Heart right ventricle (tissue), 16 donors: ENCODE measurements at regions of chr3 and their contacts with region 1.

Region 1: DNA sequence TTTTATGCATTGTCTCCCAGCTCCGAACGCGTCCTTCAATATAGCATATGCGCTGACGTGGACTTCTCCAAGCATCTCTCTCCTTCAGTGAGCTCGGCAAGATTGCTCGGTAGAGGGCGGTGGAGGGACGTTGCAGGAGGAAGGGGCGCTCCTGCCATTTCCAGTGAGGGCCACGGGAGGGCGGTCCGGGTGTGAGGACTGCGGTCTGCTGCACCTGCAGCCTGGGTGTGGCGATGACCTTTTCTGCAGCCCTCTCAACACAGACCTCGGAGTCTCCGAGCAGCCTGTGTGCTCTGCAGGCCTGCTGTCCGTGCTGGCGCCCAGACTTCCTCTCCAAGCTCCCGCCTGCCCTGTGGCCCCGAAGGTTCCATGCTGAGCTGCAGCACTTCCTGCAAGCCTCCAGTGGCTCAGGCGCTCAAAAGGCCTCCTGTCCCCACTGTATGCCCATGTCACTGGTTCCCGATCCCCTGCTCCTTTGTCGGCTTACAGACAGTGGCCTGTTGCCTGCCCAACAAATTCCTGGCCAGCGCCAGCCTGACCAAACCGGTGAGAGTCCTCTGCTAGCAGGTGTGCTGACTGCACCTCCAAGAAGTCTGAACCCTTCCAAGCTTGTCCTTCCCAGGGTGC is 8.9 kb upstream of the RTP3 start:
- DNase-seq: peak; percentile 91
- ATAC-seq: peak; percentile 81 to 95 (median 92)
- H3K4me3 ChIP-seq: peak overlapping the region in 4 of 10 donors; percentile 13 to 38 (median 16)
- H3K27ac ChIP-seq: no peak overlapping the region
- H3K4me1 ChIP-seq: peaks cover 0 to 27% (median 11%) of the 10 kb centered on the region in 9 donors
- H3K27me3 ChIP-seq: no peaks in the 10 kb centered on the region
- CTCF ChIP-seq: peak; percentile 91 to 100 (median 98)

Region 2: GRCh38 chr3:46462111-46462510 is 26.7 kb before region 1 on chr3:
- intact Hi-C with region 1: loop called in 2 of 10 experiments (anchors 2 kb)
- DNase-seq: no peak
- ATAC-seq: peak; percentile 19 to 65 (median 48)
- H3K4me3 ChIP-seq: peak overlapping the region in 9 of 10 donors; percentile 7 to 50 (median 42)
- H3K27ac ChIP-seq: peak overlapping the region in 9 of 10 donors; percentile 66 to 86 (median 78)
- H3K4me1 ChIP-seq: peaks cover 0 to 51% (median 21%) of the 10 kb centered on the region in 9 donors
- H3K27me3 ChIP-seq: peaks cover 0 to 37% (median 16%) of the 10 kb centered on the region in 7 donors
- CTCF ChIP-seq: peak in 7 of 9 donors; percentile 15 to 53 (median 35)

Region 3: GRCh38 chr3:46553154-46553553 is 64.3 kb after region 1 on chr3:
- intact Hi-C with region 1: loop called in 7 of 10 experiments (anchors 1 to 5 kb)
- DNase-seq: no peak
- ATAC-seq: no peak
- H3K4me3 ChIP-seq: no peak overlapping the region
- H3K27ac ChIP-seq: no peak overlapping the region
- H3K4me1 ChIP-seq: peaks cover 3 to 26% (median 9%) of the 10 kb centered on the region in 9 donors
- H3K27me3 ChIP-seq: no peaks in the 10 kb centered on the region
- CTCF ChIP-seq: no peak

Region 4: GRCh38 chr3:46558184-46559043 is 69.6 kb after region 1 on chr3:
- intact Hi-C with region 1: loop called in 7 of 10 experiments (anchors 1 to 5 kb)
- DNase-seq: peak; percentile 81 to 82
- ATAC-seq: peak; percentile 83 to 96 (median 90)
- H3K4me3 ChIP-seq: peak overlapping the region in 9 of 10 donors; percentile 24 to 63 (median 41)
- H3K27ac ChIP-seq: peak overlapping the region in 9 of 10 donors; percentile 53 to 98 (median 69)
- H3K4me1 ChIP-seq: peaks cover 3 to 62% (median 23%) of the 10 kb centered on the region in 9 donors
- H3K27me3 ChIP-seq: no peaks in the 10 kb centered on the region
- CTCF ChIP-seq: peak in 8 of 9 donors; percentile 36 to 91 (median 65)

Region 5: DNA sequence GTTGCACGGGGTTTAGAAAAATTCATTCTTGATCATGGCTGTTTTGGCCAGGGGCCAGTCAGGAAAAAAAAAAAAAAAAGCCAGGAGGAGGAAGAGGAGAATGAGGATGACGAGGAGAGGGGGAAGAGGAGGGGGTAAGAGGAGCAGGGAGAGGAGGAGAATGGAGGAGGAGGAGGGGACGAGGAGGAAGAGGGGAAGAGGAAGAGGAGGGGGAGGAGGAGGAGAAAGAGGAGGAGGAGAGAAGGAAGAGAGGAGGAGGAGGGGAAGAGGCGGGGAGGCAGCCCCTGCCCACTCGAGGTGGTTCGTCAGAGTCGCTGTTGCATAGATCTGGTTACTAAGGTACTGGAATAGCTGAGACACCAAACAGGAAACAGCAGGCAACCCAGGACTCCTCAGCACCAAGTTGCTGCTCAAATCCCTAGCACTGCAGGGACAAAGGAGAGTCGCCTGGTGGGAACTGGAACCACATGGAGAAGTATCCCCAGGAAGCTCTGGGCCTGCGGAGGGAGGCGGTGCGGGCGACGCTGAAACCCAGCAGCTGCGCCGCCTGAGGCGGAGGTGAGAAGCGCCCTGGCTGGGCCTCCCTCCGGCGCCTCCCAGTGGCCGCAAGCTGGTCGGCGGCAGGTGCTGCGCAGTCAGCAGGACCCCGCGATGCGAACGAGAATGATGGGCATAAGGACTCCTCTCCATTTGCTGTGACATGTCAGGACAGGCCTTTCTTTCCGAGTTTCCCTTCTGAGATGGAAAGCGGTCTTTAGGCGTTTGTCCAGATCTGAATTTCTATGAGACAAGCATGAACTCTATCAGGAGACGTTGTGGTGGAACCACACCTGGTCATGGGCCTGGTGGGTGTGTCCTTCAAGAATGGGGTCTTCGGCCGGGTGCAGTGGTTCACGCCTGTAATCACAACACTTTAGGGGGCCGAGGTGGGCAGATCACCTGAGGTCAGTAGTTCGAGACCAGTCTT is 141.0 kb after region 1 on chr3:
- intact Hi-C with region 1: loop called (anchors 1 to 10 kb)
- DNase-seq: peak; percentile 74 to 86
- ATAC-seq: peak; percentile 89 to 97 (median 93)
- H3K4me3 ChIP-seq: peak overlapping the region in 8 of 10 donors; percentile 9 to 50 (median 42)
- H3K27ac ChIP-seq: peak overlapping the region; percentile 36 to 79 (median 66)
- H3K4me1 ChIP-seq: peaks cover 0 to 26% (median 7%) of the 10 kb centered on the region in 9 donors
- H3K27me3 ChIP-seq: no peaks in the 10 kb centered on the region
- CTCF ChIP-seq: peak; percentile 92 to 100 (median 96)

Region 6: GRCh38 chr3:46695177-46695961 is 206.5 kb after region 1 on chr3:
- intact Hi-C with region 1: loop called in 1 of 10 experiments (anchors 10 kb)
- DNase-seq: peak; percentile 65 to 77
- ATAC-seq: peak; percentile 5 to 65 (median 44)
- H3K4me3 ChIP-seq: no peak overlapping the region
- H3K27ac ChIP-seq: peak overlapping the region; percentile 76 to 99 (median 92)
- H3K4me1 ChIP-seq: peaks cover 66 to 89% (median 79%) of the 10 kb centered on the region in 9 donors
- H3K27me3 ChIP-seq: peaks cover 0 to 11% (median 0%) of the 10 kb centered on the region in 7 donors
- CTCF ChIP-seq: peak in 6 of 9 donors; percentile 17 to 30 (median 24)

Region 7: GRCh38 chr3:47583320-47584075 is 1094.7 kb after region 1 on chr3:
- intact Hi-C with region 1: no loop called
- DNase-seq: no peak
- ATAC-seq: no peak
- H3K4me3 ChIP-seq: no peak overlapping the region
- H3K27ac ChIP-seq: no peak overlapping the region
- H3K4me1 ChIP-seq: peaks cover 0 to 6% (median 4%) of the 10 kb centered on the region in 9 donors
- H3K27me3 ChIP-seq: peaks cover 0 to 19% (median 7%) of the 10 kb centered on the region in 7 donors
- CTCF ChIP-seq: no peak